AG04450 (cell line): ENCODE measurements at regions of chr9 and their contacts with region 1.

Region 1: GRCh38 chr9:128361986-128362646 is 9.1 kb upstream of the URM1 start:
- DNase-seq: peak; percentile 64
- H3K4me3 ChIP-seq: peak overlapping the region; percentile 59
- H3K27ac ChIP-seq: peak overlapping the region; percentile 39
- H3K27me3 ChIP-seq: no peaks in the 10 kb centered on the region
- CTCF ChIP-seq: peak; percentile 91

Region 2: DNA sequence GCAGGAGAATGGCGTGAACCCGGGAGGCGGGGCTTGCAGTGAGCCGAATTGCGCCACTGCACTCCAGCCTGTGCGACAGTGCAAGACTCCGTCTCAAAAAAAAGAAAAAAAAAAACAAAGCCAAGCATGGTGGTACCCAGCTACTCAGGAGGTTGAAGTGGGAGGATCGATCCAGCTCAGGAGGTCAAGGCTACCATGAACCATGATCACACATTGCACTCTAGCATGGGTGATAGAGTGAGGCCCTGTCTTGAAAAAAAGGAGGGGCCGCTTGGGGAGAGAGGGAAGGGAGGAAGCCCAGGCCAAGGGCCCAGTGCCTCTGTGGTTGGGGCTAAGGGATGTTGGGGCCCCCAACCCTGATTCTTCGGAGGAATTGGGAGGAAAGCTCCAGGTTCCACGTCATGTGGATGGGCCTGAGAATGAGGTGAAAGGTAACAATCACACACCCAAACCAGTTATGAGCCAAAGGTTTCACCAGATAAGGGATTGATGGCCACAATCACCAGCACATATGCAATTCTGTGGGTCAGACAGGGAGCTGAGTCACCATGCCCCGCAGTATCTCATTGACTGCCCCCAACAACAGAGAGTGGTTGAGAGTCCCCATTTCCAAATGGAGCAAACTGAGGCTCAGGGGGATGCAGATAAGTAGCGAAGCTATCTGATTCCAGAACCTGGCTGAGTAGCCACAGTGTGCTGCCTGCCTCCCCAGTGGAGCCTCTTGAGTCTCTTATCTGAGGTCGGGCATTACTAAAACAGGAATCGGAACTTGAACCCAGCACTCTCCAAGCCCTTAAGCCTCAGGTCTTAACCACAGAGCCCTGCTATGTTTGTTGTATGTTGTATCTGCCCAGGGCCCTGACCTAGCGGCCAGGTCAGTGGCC is 65.5 kb before region 1 on chr9:
- CTCF ChIA-PET with region 1: interaction called, 31 read pairs
- POLR2A ChIA-PET with region 1: interaction called, 4 read pairs
- DNase-seq: no peak
- H3K4me3 ChIP-seq: no peak overlapping the region
- H3K27ac ChIP-seq: no peak overlapping the region
- H3K27me3 ChIP-seq: no peaks in the 10 kb centered on the region
- CTCF ChIP-seq: no peak

Region 3: GRCh38 chr9:128310461-128310860 is 51.7 kb before region 1 on chr9:
- CTCF ChIA-PET with region 1: interaction called, 10 read pairs
- POLR2A ChIA-PET with region 1: no interaction called
- DNase-seq: no peak
- H3K4me3 ChIP-seq: no peak overlapping the region
- H3K27ac ChIP-seq: no peak overlapping the region
- H3K27me3 ChIP-seq: no peaks in the 10 kb centered on the region
- CTCF ChIP-seq: no peak

Region 4: GRCh38 chr9:128412120-128412790 is 50.1 kb after region 1 on chr9:
- CTCF ChIA-PET with region 1: interaction called, 35 read pairs
- POLR2A ChIA-PET with region 1: no interaction called
- DNase-seq: no peak
- H3K4me3 ChIP-seq: no peak overlapping the region
- H3K27ac ChIP-seq: no peak overlapping the region
- H3K27me3 ChIP-seq: peaks cover 18% of the 10 kb centered on the region
- CTCF ChIP-seq: peak; percentile 61

Region 5: GRCh38 chr9:128595471-128595870 is 233.4 kb after region 1 on chr9:
- CTCF ChIA-PET with region 1: no interaction called
- POLR2A ChIA-PET with region 1: no interaction called
- DNase-seq: no peak
- H3K4me3 ChIP-seq: no peak overlapping the region
- H3K27ac ChIP-seq: no peak overlapping the region
- H3K27me3 ChIP-seq: no peaks in the 10 kb centered on the region
- CTCF ChIP-seq: no peak